A673 (cell line): ENCODE measurements at regions of chr18 and their contacts with region 1.

Region 1: DNA sequence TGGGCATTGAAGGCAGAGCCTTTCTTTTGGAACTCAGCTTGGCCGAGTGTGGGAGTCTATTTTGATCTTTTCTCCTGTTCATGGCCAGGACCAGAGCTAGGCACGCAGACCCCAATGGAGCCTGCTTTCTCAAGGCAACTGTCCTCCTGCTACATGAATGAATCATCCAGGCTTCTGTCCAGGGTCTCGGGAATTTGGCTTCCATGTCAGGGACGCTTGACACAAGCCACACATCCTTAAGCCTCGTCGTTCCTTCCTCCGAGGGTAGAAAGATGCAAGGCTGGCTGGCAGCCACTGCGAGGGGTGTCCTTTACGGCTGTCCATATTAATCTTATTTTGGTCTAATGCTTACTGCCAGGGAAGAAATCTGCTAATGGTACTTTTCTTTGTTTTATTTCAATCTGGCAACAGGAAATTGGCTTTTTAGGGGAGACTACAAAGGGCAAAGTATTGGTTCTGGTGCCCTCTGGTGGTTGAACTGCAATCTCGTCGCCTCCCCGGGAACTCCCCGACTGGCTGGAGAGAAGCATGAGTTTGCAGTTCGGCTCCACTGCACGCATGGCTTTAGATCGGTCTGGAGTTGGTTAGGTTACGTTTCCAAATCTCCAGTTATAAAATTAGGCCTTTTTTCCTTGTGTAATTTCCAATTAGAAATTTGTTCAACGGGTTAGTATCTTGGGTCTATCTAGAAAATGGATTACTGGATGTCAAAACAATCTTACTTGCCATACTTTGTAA is 135.2 kb downstream of the ALPK2 start:
- DNase-seq: peak; percentile 86
- H3K4me3 ChIP-seq: no peak overlapping the region
- H3K27ac ChIP-seq: no peak overlapping the region
- H3K4me1 ChIP-seq: peaks cover 6% of the 10 kb centered on the region
- H3K27me3 ChIP-seq: no peaks in the 10 kb centered on the region
- CTCF ChIP-seq: peak; percentile 96

Region 2: GRCh38 chr18:57881818-57882413 is 611.8 kb before region 1 on chr18:
- CTCF ChIA-PET with region 1: no interaction called
- POLR2A ChIA-PET with region 1: no interaction called
- intact Hi-C with region 1: loop called (anchors 10 kb)
- DNase-seq: peak; percentile 87
- H3K4me3 ChIP-seq: no peak overlapping the region
- H3K27ac ChIP-seq: no peak overlapping the region
- H3K4me1 ChIP-seq: no peaks in the 10 kb centered on the region
- H3K27me3 ChIP-seq: no peaks in the 10 kb centered on the region
- CTCF ChIP-seq: peak; percentile 95

Region 3: DNA sequence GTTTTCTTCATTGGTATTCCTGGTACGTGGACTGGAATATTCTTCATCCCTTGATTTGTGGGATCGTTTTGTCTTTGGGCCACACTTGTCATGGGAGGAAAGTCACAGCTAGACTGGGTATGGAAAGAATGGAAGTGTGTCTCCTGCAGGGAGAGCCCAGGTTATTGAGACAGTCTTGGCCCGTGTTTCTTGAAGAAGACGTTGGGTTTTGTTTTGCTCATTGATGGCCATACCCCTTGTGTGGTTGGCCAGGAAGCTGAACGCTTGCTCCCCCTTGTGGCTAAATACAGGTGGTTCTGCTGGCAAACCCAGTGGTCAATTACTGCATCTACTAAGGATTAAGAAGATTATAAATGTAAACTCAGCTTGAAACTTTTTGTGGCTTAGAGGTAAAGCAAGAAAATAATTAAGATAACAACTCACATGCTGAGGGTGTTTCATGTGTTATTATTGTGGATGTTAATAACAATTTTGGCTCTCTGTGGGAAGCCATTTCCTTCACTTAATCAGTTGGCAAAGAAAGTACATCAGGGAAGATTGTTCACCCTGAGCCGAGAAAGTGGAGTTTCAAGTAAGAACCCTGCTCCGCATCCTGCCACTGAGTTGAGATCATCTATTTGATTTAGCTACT is 357.9 kb before region 1 on chr18:
- CTCF ChIA-PET with region 1: no interaction called
- POLR2A ChIA-PET with region 1: no interaction called
- intact Hi-C with region 1: loop called (anchors 5 kb)
- DNase-seq: peak; percentile 90
- H3K4me3 ChIP-seq: no peak overlapping the region
- H3K27ac ChIP-seq: no peak overlapping the region
- H3K4me1 ChIP-seq: peaks cover 17% of the 10 kb centered on the region
- H3K27me3 ChIP-seq: peaks cover 68% of the 10 kb centered on the region
- CTCF ChIP-seq: peak; percentile 96

Region 4: DNA sequence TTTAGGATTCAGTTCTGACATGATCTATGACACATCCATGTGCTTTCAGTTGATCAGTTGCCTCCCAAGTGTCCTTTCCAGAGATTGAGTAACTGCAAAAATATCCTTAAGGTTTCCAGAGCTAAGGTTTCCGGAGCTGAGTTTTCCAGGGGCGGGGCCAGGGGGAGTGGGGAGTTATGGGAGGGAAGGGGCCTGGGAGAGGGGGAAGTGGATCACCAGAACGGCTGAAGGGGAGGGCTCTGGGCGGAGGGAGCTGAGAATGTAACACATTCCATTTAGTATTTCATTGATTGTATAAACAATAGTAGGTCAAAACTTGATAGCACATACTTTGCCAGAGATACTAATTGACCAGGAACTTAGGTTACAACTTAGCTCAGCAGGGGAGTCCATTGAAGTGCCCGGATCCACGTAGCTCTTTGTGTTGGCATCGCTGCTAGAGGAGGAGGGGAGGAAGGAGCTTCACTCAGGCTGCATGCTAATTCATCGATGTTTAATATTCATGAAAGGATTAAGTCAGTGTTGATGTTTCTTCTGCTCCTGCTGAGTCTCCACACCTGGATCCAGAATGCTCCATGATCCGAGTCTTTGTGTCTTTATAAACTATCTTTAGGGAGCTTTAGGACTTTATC is 154.6 kb before region 1 on chr18:
- CTCF ChIA-PET with region 1: no interaction called
- POLR2A ChIA-PET with region 1: no interaction called
- intact Hi-C with region 1: loop called (anchors 5 kb)
- DNase-seq: peak; percentile 76
- H3K4me3 ChIP-seq: no peak overlapping the region
- H3K27ac ChIP-seq: peak overlapping the region; percentile 53
- H3K4me1 ChIP-seq: peaks cover 51% of the 10 kb centered on the region
- H3K27me3 ChIP-seq: no peaks in the 10 kb centered on the region
- CTCF ChIP-seq: no peak

Region 5: DNA sequence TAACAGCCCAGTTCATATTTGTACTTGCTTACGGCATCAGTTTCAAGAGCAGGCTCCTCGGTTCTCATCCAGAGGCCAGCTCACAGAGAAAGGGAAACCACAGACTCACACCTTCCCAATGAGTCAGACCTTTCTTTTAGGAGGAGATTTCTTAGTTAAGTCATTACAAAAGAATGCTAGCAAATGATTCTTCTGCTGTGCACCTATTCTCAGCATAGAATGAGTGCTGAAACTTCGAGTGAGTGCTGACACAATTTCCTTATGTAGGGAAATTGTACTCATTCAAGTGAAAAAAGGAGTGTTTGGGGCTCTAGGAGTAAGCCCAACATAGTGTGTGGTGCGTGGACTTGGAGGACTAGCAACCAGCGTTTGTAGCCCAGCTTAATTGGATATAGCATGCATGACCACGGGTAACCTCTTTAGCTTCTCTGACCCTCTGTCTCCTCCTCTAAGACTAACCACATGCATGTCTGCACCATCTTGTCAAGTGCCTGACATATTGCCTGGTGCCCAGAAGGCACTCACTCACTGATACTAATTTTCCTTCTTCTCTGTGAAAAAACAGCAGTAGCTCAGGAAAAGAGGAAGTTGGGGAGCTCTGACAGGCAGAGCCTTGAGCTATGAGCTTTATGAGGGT is 48.2 kb after region 1 on chr18:
- CTCF ChIA-PET with region 1: no interaction called
- POLR2A ChIA-PET with region 1: no interaction called
- intact Hi-C with region 1: no loop called
- DNase-seq: no peak
- H3K4me3 ChIP-seq: no peak overlapping the region
- H3K27ac ChIP-seq: no peak overlapping the region
- H3K4me1 ChIP-seq: no peaks in the 10 kb centered on the region
- H3K27me3 ChIP-seq: no peaks in the 10 kb centered on the region
- CTCF ChIP-seq: no peak

Region 6: GRCh38 chr18:58762781-58763171 is 269.1 kb after region 1 on chr18:
- CTCF ChIA-PET with region 1: interaction called, 13 read pairs
- POLR2A ChIA-PET with region 1: no interaction called
- intact Hi-C with region 1: no loop called
- DNase-seq: no peak
- H3K4me3 ChIP-seq: no peak overlapping the region
- H3K27ac ChIP-seq: no peak overlapping the region
- H3K4me1 ChIP-seq: peaks cover 7% of the 10 kb centered on the region
- H3K27me3 ChIP-seq: no peaks in the 10 kb centered on the region
- CTCF ChIP-seq: no peak

Region 7: DNA sequence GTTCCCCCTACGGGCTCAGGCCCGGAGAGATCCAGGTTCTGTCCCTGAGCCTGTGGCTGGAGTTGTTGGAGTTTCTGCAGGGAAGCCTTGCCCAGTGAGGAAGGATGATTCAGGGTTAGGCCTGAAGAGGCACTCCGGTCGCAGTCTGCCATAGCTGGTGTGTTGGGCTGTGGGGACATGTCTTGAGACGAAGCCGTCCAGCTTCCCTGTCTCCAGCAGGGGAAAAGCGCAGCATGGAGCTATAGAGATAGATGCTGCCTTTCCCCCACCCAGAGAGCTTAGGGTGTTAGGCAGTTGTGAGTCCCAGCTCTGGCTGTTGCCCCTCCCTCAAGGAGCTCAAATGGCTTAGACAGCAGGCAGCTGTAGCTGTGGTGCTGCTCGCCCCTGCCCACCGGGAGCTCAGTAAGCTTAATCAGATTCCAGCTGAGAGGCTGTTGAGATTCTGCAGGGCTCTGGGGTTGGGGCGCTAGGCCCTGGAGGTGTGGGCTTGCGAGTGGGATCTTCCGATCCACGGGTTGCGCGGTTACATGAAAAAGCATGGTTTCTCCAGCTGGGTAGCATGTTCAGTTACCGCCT is 1510.0 kb after region 1 on chr18:
- CTCF ChIA-PET with region 1: no interaction called
- POLR2A ChIA-PET with region 1: no interaction called
- intact Hi-C with region 1: no loop called
- DNase-seq: no peak
- H3K4me3 ChIP-seq: no peak overlapping the region
- H3K27ac ChIP-seq: no peak overlapping the region
- H3K4me1 ChIP-seq: no peaks in the 10 kb centered on the region
- H3K27me3 ChIP-seq: peaks cover 4% of the 10 kb centered on the region
- CTCF ChIP-seq: no peak